Activated CD4-positive, alpha-beta T cell treated with anti-CD3 and anti-CD28 coated beads for 36 hours (primary cell): ENCODE measurements at regions of chr5 and their contacts with region 1.

Region 1: GRCh38 chr5:137735555-137736284 is at the start of gene KLHL3:
- DNase-seq: peak; percentile 71
- ATAC-seq: peak; percentile 49
- H3K4me3 Mint-ChIP-seq: no peak within 1 kb of the TSS
- H3K27ac Mint-ChIP-seq: no peak within 1 kb of the TSS
- H3K4me1 Mint-ChIP-seq: peaks cover 18% of the 10 kb centered on the region
- H3K27me3 Mint-ChIP-seq: no peaks in the 10 kb centered on the region
- total RNA-seq, gene KLHL3: 6.8 to 10.8 TPM

Region 2: GRCh38 chr5:137695651-137696428 is 39.9 kb before region 1 on chr5:
- CTCF ChIA-PET with region 1: interaction called, 30 read pairs
- POLR2A ChIA-PET with region 1: interaction called, 5 read pairs
- intact Hi-C with region 1: loop called (anchors 1 kb)
- DNase-seq: peak; percentile 42
- ATAC-seq: peak; percentile 75
- H3K4me3 Mint-ChIP-seq: peak overlapping the region; percentile 40
- H3K27ac Mint-ChIP-seq: peak overlapping the region; percentile 89
- H3K4me1 Mint-ChIP-seq: peaks cover 51% of the 10 kb centered on the region
- H3K27me3 Mint-ChIP-seq: no peaks in the 10 kb centered on the region

Region 3: GRCh38 chr5:137708796-137709559 is 26.7 kb before region 1 on chr5:
- CTCF ChIA-PET with region 1: no interaction called
- POLR2A ChIA-PET with region 1: no interaction called
- intact Hi-C with region 1: no loop called
- DNase-seq: no peak
- ATAC-seq: no peak
- H3K4me3 Mint-ChIP-seq: no peak overlapping the region
- H3K27ac Mint-ChIP-seq: no peak overlapping the region
- H3K4me1 Mint-ChIP-seq: peaks cover 4% of the 10 kb centered on the region
- H3K27me3 Mint-ChIP-seq: no peaks in the 10 kb centered on the region